ENCODE measurements at regions of chr3 and their contacts with region 1.

Region 1: GRCh38 chr3:101780661-101781060 is 1.6 kb downstream of the NXPE3 start:
- DNase-seq: peak; percentile 91
- ATAC-seq: peak; percentile 56
- H3K4me3 ChIP-seq: 0 out of 2 replicates have a peak overlapping the region, but pooled peaks have one; percentile 1
- H3K27ac ChIP-seq: peak overlapping the region; percentile 50; the same call in 1 of the 2 replicates
- H3K4me1 ChIP-seq: peaks cover 5% of the 10 kb centered on the region; the same call in 1 of the 2 replicates
- H3K27me3 ChIP-seq: no peaks in the 10 kb centered on the region
- CTCF ChIP-seq: no peak
- POLR2A ChIP-seq: no peak
- RAD21 ChIP-seq: no peak

Region 2: DNA sequence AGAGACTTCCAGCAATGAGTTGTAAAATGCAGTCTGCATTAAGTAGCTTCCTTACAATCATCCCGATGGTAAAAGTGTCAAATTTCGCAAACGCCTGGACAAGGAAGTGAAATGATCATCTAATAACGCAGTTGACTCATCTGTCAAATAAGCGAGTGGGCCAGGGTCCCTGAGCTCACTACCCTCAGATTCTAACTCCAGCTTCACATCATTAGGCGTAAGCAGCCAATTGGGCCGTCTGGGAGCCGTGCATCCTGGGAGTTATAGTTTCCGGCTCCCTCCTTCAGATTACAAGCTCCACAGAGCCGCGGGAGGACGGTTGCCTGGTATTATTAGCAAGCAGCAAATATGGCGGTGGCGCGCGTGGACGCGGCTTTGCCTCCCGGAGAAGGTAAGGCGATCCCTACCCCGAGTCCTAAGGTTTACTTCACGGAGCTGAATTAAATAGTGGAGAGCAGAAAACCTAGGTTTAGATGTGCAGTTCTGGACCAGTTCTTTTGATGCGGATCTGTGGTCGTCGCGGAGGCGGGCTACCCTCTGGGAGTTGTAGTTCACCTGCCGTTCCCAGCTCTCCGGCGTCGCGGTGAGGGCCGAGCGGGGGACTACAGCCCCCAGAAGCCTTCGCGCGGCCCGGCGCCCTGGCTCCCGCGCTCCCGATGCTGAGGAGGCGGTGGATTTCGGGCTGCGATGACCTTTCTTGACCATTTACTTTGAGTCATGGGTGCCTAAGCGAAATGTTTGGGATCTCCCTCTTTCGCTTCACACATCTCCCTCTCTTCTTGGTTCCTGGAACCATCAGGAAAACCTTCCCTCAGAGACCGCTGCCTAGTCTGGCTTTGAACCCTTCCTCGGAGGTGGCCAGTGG is 56.1 kb before region 1 on chr3 and contains the start of gene CEP97:
- CTCF ChIA-PET with region 1: no interaction called
- POLR2A ChIA-PET with region 1: no interaction called
- dilution Hi-C with region 1: no loop called
- in situ Hi-C with region 1: no loop called
- intact Hi-C with region 1: loop called (anchors 2 kb)
- DNase-seq: peak; percentile 90
- ATAC-seq: peak; percentile 98
- H3K4me3 ChIP-seq: peak within 1 kb of the TSS; percentile 89
- H3K27ac ChIP-seq: peak within 1 kb of the TSS; percentile 65
- H3K4me1 ChIP-seq: no peaks in the 10 kb centered on the region
- H3K27me3 ChIP-seq: no peaks in the 10 kb centered on the region
- CTCF ChIP-seq: no peak
- POLR2A ChIP-seq: no peak
- RAD21 ChIP-seq: 0 out of 2 replicates have a peak, but pooled peaks have one; percentile 0
- total RNA-seq, gene CEP97: 21.9 TPM in 2 replicates

Region 3: GRCh38 chr3:101827211-101828174 is 46.8 kb after region 1 on chr3:
- CTCF ChIA-PET with region 1: no interaction called
- POLR2A ChIA-PET with region 1: no interaction called
- dilution Hi-C with region 1: no loop called
- in situ Hi-C with region 1: no loop called
- intact Hi-C with region 1: loop called (anchors 2 kb)
- DNase-seq: peak; percentile 84
- ATAC-seq: peak; percentile 82
- H3K4me3 ChIP-seq: peak overlapping the region; percentile 51
- H3K27ac ChIP-seq: peak overlapping the region; percentile 97
- H3K4me1 ChIP-seq: peaks cover 4% of the 10 kb centered on the region; the same call in 1 of the 2 replicates
- H3K27me3 ChIP-seq: no peaks in the 10 kb centered on the region
- CTCF ChIP-seq: no peak
- POLR2A ChIP-seq: peak; percentile 83
- RAD21 ChIP-seq: no peak

Measured in IMR-90 (cell line).